Heart right ventricle (tissue), 16 donors: ENCODE measurements at regions of chr22 and their contacts with region 1.

Region 1: DNA sequence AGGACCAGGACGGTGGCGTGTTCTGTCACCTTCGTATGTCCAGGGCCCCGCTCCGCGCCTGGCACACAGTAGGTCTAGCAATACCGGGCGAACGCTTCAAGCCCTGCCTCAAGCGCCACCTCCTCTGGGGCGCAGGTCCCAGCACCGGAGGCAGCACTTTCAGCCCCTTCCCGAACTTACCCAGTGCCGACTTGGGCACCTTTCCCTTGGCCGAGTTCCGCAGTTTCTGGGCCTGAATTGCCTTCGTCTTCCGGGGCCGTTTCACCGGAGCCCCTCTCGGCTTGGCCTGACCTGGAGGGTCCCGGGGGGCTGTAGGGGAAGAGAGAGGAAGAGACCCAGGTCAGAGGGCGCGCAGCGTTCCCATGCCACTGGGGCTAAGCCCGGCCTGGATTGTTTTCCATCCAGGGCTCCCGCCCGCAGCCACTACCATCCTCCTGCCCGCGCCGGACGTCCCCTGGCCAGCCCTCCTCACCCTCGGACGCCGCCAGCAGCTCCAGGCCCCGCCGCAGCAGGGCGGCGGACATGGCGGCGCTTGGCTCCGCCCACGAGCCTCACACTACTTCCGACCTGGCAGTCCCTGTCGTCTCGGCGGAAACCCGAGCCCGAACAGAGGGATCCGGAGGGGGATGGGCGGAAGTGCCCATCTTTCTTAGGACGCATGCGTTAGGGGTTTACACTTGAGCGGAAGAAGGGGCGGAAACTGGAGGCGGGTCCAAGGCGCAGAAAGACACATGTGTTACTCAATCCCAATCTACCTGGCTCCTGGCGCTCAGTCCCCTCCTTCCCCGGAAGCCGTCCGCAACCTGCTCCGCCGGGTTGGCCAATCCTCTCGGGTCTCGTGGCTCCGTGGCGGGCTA is at the start of gene RPS19BP1:
- DNase-seq: peak; percentile 98 to 99
- ATAC-seq: peak; percentile 85 to 93 (median 90)
- H3K4me3 ChIP-seq: peak within 1 kb of the TSS; percentile 67 to 88 (median 74)
- H3K27ac ChIP-seq: peak within 1 kb of the TSS; percentile 88 to 98 (median 92)
- H3K4me1 ChIP-seq: peaks cover 25 to 62% (median 47%) of the 10 kb centered on the region in 9 donors
- H3K27me3 ChIP-seq: no peaks in the 10 kb centered on the region
- CTCF ChIP-seq: no peak
- total RNA-seq, gene RPS19BP1: 31.3 to 64.0 (median 37.2) TPM

Region 2: GRCh38 chr22:39234269-39234787 is 298.1 kb before region 1 on chr22:
- intact Hi-C with region 1: no loop called
- DNase-seq: peak; percentile 80 to 84
- ATAC-seq: peak; percentile 58 to 83 (median 73)
- H3K4me3 ChIP-seq: peak overlapping the region in 4 of 10 donors; percentile 4 to 38 (median 8)
- H3K27ac ChIP-seq: peak overlapping the region; percentile 81 to 98 (median 92)
- H3K4me1 ChIP-seq: peaks cover 33 to 97% (median 88%) of the 10 kb centered on the region in 9 donors
- H3K27me3 ChIP-seq: peaks cover 0 to 96% (median 0%) of the 10 kb centered on the region in 7 donors
- CTCF ChIP-seq: peak in 5 of 9 donors; percentile 7 to 39 (median 28)

Region 3: GRCh38 chr22:39343259-39344048 is 189.0 kb before region 1 on chr22:
- intact Hi-C with region 1: loop called in 5 of 10 experiments (anchors 5 to 10 kb)
- DNase-seq: peak in 1 of 2 donors; percentile 62
- ATAC-seq: peak; percentile 43 to 84 (median 72)
- H3K4me3 ChIP-seq: no peak overlapping the region
- H3K27ac ChIP-seq: no peak overlapping the region
- H3K4me1 ChIP-seq: peaks cover 0 to 7% (median 0%) of the 10 kb centered on the region in 9 donors
- H3K27me3 ChIP-seq: peaks cover 0 to 15% (median 0%) of the 10 kb centered on the region in 7 donors
- CTCF ChIP-seq: peak; percentile 40 to 82 (median 66)

Region 4: DNA sequence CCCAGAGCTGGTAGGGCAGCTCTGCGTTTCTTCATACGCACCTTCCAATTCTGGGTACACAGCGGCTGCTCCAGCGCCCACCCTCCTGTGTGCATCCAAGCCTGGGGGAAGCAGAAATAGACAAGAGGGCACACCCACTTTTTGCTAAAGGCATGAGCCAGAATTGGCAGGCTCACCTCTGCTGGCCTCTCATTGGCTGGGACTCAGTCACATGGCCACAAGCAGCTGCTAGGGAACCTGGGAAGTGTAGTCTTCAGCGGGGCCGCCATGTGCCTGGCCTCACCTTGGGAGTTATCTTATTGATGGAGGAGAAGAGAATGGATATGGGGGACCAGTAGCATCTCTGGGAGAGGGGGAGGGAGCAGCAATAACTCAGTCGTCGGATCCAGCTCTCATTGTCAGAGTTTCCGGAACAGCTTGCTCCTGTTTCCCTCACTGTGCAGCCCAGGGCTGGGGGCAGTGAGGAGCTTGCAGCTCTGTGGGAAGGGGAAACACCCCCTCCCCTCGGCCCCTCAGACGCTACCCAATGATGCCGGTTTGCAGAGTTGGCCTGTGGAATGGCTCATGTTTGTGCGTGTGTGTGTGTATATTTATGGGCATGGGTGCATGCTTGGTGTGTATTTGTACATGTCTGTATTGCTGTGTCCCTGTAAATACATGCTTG is 42.2 kb before region 1 on chr22:
- intact Hi-C with region 1: loop called in 6 of 10 experiments (anchors 5 kb)
- DNase-seq: peak; percentile 74 to 81
- ATAC-seq: peak; percentile 85 to 92 (median 88)
- H3K4me3 ChIP-seq: no peak overlapping the region
- H3K27ac ChIP-seq: peak overlapping the region in 1 of 10 donors; percentile 2
- H3K4me1 ChIP-seq: peaks cover 0 to 31% (median 4%) of the 10 kb centered on the region in 9 donors
- H3K27me3 ChIP-seq: no peaks in the 10 kb centered on the region
- CTCF ChIP-seq: no peak

Region 5: DNA sequence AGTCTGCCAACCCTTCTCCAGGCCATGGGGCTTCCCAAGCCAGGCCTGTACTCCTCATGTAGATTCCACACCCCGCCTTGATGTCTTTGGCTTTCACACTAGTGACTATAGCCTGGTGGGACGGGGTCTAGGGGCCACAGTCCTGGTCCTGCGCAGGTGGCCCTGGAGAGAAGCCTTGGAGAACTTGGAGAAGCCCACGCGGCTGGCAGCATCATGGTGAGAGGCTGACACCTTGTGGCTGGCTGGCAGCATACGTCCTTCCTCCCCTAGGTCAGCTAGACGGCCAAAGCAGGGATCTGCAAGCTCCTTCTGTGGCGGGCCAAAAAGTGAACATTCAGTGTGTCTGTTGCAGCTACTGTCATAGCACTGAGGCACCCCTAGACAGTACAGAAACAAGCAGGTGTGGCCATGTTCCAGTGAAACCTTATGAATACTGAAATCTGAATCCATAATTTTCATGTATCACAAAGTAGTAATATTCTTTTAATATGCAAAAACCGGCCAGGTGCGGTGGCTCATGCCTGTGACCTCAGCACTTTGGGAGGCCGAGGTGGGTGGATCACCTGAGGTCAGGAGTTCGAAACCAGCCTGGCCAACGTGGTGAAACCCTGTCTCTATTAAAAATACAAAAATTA is 504.3 kb after region 1 on chr22:
- intact Hi-C with region 1: loop called in 4 of 10 experiments (anchors 2 to 5 kb)
- DNase-seq: peak; percentile 43 to 51
- ATAC-seq: peak; percentile 57 to 78 (median 73)
- H3K4me3 ChIP-seq: no peak overlapping the region
- H3K27ac ChIP-seq: no peak overlapping the region
- H3K4me1 ChIP-seq: peaks cover 0 to 23% (median 18%) of the 10 kb centered on the region in 9 donors
- H3K27me3 ChIP-seq: peaks cover 0 to 39% (median 0%) of the 10 kb centered on the region in 7 donors
- CTCF ChIP-seq: peak; percentile 38 to 77 (median 68)

Region 6: GRCh38 chr22:40352763-40353162 is 820.3 kb after region 1 on chr22:
- intact Hi-C with region 1: loop called in 6 of 10 experiments (anchors 5 to 10 kb)
- DNase-seq: no peak
- ATAC-seq: peak in 1 of 8 donors; percentile 16
- H3K4me3 ChIP-seq: no peak overlapping the region
- H3K27ac ChIP-seq: no peak overlapping the region
- H3K4me1 ChIP-seq: peaks cover 0 to 14% (median 10%) of the 10 kb centered on the region in 9 donors
- H3K27me3 ChIP-seq: no peaks in the 10 kb centered on the region
- CTCF ChIP-seq: no peak